Activated B cell treated with CpG ODN at 0.5 μM for 24 hours (primary cell): ENCODE measurements at regions of chr15 and their contacts with region 1.

Region 1: GRCh38 chr15:52466134-52466701 is 62.5 kb downstream of the MYO5A start:
- DNase-seq: peak; percentile 75
- ATAC-seq: peak; percentile 99
- H3K4me3 Mint-ChIP-seq: peak overlapping the region; percentile 25
- H3K27ac Mint-ChIP-seq: peak overlapping the region; percentile 91
- H3K4me1 Mint-ChIP-seq: peaks cover 52% of the 10 kb centered on the region
- H3K27me3 Mint-ChIP-seq: no peaks in the 10 kb centered on the region
- CTCF ChIP-seq: no peak

Region 2: DNA sequence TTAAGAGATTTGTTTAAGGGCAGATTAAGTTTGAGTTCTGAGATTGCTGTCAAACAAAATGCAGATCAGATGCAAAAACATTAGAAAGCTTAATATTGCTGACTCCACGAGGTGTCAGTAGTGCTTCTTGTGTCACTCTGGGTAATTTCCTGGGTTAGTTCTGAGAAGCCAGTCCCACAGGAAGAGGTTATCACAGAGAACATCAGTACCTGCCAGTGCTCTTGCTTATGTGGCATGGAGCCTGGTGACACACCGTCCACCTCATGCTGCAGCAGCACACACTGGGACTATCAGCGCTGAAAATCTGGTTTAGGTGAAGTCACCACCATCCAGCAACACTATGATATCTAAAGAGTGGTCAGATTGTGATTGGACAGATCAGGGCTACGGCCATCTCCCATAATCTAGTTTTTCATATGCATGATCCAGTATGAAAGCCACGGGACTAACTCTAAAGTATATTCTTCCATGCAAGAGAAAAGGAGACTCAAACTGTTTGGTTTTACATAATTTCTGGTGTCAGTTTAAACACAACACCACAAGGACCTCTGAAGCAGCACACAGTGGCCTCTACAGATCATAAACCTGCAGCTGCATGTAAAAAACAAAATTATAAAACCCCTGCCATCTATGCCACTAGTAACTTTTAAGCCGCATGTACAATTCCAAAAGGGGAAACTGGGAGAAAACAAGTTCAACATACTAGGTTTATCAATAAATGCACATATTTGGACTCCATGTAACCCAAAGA is 134.6 kb before region 1 on chr15:
- CTCF ChIA-PET with region 1: interaction called, 9 read pairs
- POLR2A ChIA-PET with region 1: no interaction called
- intact Hi-C with region 1: loop called (anchors 2 kb)
- DNase-seq: no peak
- ATAC-seq: peak; percentile 99
- H3K4me3 Mint-ChIP-seq: no peak overlapping the region
- H3K27ac Mint-ChIP-seq: peak overlapping the region; percentile 15
- H3K4me1 Mint-ChIP-seq: peaks cover 13% of the 10 kb centered on the region
- H3K27me3 Mint-ChIP-seq: no peaks in the 10 kb centered on the region
- CTCF ChIP-seq: no peak

Region 3: DNA sequence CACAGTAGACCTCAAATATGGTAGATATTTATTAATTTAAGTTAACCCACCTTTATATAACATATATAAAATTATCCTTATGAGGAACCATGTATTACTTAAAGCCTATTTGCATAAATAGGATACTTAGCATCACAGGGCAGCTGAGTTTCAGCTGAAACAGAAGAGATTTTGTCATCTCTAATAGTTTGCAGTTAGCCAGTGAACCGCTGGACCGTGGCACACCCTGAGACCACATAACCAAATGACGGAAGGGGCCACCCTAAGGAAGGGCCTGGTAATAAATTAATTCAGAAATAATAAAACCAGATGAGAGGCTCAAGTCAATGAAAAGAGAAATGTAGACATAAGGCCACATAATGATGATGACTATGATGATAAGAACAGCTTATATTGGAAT is 45.2 kb before region 1 on chr15:
- CTCF ChIA-PET with region 1: no interaction called
- POLR2A ChIA-PET with region 1: interaction called, 6 read pairs
- intact Hi-C with region 1: loop called (anchors 2 kb)
- DNase-seq: no peak
- ATAC-seq: peak; percentile 82
- H3K4me3 Mint-ChIP-seq: no peak overlapping the region
- H3K27ac Mint-ChIP-seq: no peak overlapping the region
- H3K4me1 Mint-ChIP-seq: peaks cover 19% of the 10 kb centered on the region
- H3K27me3 Mint-ChIP-seq: no peaks in the 10 kb centered on the region
- CTCF ChIP-seq: no peak

Region 4: DNA sequence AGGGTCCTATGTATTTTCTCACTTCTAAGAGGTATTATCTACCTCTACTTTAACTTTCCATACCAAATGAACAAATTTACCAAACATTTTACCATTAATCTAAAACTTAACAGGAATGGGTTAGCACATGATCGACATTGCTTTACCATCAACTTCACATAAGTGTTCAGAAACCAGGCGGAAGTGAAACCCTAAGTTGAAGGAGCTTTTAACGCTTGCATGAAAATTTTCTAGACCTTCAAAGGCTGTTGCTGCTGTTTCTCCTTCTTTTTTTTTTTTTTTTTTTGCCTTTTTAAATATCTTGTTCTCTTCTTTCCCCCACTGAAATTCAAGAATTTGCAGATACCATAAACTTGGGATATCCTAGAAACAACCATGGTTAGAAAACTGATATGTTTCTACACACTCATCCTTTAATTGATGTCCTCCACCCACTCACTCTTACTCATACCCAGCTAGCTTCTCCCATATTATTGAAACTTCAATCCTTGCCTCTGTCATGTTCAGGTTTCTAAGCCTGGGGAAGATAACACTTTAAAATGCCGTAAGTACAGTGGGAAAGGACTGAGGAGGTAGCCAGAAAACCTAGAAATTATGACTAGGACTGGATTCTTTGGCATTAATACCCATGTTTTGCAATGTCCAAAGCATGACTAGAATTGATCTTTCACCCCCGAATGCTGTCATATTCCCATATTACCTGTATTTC is 37.7 kb after region 1 on chr15:
- CTCF ChIA-PET with region 1: interaction called, 6 read pairs
- POLR2A ChIA-PET with region 1: interaction called, 6 read pairs
- intact Hi-C with region 1: loop called (anchors 1 kb)
- DNase-seq: no peak
- ATAC-seq: peak; percentile 94
- H3K4me3 Mint-ChIP-seq: peak overlapping the region; percentile 55
- H3K27ac Mint-ChIP-seq: peak overlapping the region; percentile 90
- H3K4me1 Mint-ChIP-seq: peaks cover 44% of the 10 kb centered on the region
- H3K27me3 Mint-ChIP-seq: no peaks in the 10 kb centered on the region
- CTCF ChIP-seq: no peak

Region 5: DNA sequence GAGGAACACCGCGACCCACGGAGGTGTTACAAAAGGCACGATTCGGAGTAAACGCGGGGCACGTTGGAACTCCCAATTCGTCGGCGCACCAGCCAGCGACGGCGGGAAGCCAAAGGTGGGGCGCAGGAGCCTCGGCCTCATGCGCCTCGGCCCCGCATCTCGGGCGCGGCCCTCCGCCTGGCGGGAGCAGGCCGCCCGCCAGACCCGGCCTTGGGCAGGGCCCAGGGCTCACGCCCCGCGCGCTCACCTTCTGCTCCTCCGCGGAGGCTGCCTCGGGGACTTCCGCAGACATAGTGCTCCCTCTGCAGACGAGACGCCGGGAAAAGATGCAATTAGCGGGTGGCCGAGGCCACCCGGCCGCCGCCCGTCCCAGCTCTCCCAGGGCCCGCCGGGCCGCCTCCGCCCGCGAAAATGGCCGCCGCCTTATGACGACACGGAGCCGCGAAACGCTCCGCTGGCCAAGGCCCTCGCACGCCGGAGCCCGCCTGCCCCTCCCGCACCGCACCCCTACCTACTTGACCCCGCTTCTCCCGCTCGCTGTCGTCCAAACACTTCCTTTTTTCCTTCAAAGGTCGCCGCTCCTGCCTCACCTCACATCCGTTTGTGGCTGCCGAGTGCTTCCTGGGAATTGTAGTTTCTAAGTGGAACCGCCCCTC is 102.5 kb after region 1 on chr15 and contains the start of gene ARPP19:
- CTCF ChIA-PET with region 1: interaction called, 4 read pairs
- POLR2A ChIA-PET with region 1: interaction called, 4 read pairs
- intact Hi-C with region 1: loop called (anchors 1 kb)
- DNase-seq: peak; percentile 82
- ATAC-seq: peak; percentile 83
- H3K4me3 Mint-ChIP-seq: peak within 1 kb of the TSS; percentile 97
- H3K27ac Mint-ChIP-seq: peak within 1 kb of the TSS; percentile 100
- H3K4me1 Mint-ChIP-seq: peaks cover 49% of the 10 kb centered on the region
- H3K27me3 Mint-ChIP-seq: no peaks in the 10 kb centered on the region
- CTCF ChIP-seq: no peak
- total RNA-seq, gene ARPP19: 145 and 153 TPM in 2 replicates